A549 (cell line): ENCODE measurements at regions of chr1 and their contacts with region 1.

Region 1: DNA sequence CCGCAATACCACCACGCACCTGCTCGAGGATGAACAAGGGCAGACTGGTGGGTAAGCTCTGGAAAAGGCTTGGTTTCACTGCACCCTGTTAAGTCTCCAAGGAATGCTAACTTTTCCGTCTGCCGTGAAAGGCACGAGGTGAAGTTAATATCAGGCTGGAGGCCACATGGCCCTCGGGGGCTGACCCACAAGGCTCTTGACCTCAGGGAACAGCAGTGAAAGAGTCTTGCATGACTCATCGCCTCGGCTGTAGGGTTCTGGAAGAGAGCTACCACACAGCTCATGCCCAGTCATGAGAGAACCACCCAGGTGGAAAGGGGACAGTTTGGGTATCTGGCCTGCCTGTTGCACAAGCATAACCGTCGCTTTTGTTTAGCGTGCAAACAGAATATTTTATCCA is 24.7 kb downstream of the SCCPDH start:
- DNase-seq: no peak
- ATAC-seq: 0 out of 6 replicates have a peak, but pooled peaks of 1 of the 2 experiments have one; percentile 34
- H3K4me3 ChIP-seq: no peak overlapping the region
- H3K27ac ChIP-seq: no peak overlapping the region
- H3K4me1 ChIP-seq: no peaks in the 10 kb centered on the region
- CTCF ChIP-seq: no peak
- EP300 ChIP-seq: no peak
- POLR2A ChIP-seq: no peak
- RAD21 ChIP-seq: no peak

Region 2: DNA sequence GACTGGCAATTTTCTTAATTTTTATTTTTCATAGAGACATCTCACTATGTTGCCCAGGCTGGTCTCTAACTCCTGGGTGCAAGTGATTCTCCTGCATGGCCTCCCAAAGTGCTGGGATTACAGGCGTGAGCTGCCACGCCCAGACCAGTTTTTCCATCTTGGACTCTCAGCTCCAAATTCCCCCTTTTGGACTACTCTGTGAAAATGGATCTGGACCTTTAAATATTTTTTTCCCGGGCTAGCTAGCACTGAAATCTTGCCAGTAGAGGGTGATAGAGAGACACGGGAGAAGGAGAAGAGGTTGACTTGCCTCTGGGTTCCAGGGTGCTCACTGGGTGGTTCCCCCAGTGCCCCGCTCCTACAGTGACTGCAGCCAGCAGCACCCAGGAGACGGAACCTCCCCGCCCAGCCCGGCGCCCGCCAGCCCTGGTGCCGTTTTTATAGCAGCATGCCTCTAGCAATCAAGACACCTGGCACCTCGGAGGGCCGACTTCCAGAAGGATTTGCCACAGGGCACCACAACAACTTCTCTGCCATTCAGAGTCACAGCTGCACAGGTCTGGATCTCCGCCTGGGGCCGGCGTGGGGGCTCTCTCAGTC is 59.4 kb before region 1 on chr1:
- CTCF ChIA-PET with region 1: interaction called, 17 read pairs
- POLR2A ChIA-PET with region 1: no interaction called
- DNase-seq: peak; percentile 74 to 94
- ATAC-seq: peak; percentile 97 to 98
- H3K4me3 ChIP-seq: peak overlapping the region; percentile 39
- H3K27ac ChIP-seq: peak overlapping the region; percentile 51 to 70; a peak in 5 of 6 replicates
- H3K4me1 ChIP-seq: no peaks in the 10 kb centered on the region
- CTCF ChIP-seq: peak; percentile 87
- EP300 ChIP-seq: no peak
- POLR2A ChIP-seq: no peak
- RAD21 ChIP-seq: peak; percentile 77 to 79